Caco-2 (cell line): ENCODE measurements at regions of chr3 and their contacts with region 1.

Region 1: GRCh38 chr3:72973031-72973723 is 23.4 kb upstream of the PPP4R2 start:
- DNase-seq: peak; percentile 90 to 96
- H3K4me3 ChIP-seq: peak overlapping the region; percentile 14; the same call in 1 of the 2 replicates
- H3K4me3 Mint-ChIP-seq: peak overlapping the region; percentile 68
- H3K27ac Mint-ChIP-seq: peak overlapping the region; percentile 88
- H3K4me1 ChIP-seq: peaks cover 37% of the 10 kb centered on the region
- H3K4me1 Mint-ChIP-seq: peaks cover 20% of the 10 kb centered on the region
- H3K27me3 ChIP-seq: no peaks in the 10 kb centered on the region
- H3K27me3 Mint-ChIP-seq: no peaks in the 10 kb centered on the region
- CTCF ChIP-seq: no peak

Region 2: DNA sequence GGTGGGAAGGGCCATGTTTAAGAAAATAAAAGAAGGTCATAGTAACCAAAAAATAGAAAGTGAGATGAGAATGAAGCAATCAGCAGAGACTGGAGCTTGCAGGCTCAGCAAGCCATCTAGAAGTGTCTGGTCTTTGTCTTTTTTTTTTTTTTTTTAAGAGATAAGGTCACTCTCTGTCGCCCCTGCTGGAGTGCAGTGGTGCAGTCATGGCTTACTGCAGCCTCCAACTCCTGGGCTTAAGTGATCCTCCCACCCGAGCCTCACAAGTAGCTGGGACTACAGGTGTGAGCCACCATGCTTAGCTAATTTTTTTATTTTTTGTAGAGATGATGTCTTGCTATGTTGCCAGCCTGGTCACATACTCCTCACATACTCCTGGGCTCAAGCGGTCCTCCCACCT is 49.1 kb before region 1 on chr3:
- CTCF ChIA-PET with region 1: no interaction called
- POLR2A ChIA-PET with region 1: no interaction called
- intact Hi-C with region 1: no loop called
- DNase-seq: peak in 1 of 2 experiments; percentile 22
- H3K4me3 ChIP-seq: no peak overlapping the region
- H3K4me3 Mint-ChIP-seq: no peak overlapping the region
- H3K27ac Mint-ChIP-seq: no peak overlapping the region
- H3K4me1 ChIP-seq: no peaks in the 10 kb centered on the region
- H3K4me1 Mint-ChIP-seq: no peaks in the 10 kb centered on the region
- H3K27me3 ChIP-seq: no peaks in the 10 kb centered on the region
- H3K27me3 Mint-ChIP-seq: no peaks in the 10 kb centered on the region
- CTCF ChIP-seq: no peak

Region 3: GRCh38 chr3:72953325-72953956 is 19.7 kb before region 1 on chr3:
- CTCF ChIA-PET with region 1: no interaction called
- POLR2A ChIA-PET with region 1: no interaction called
- intact Hi-C with region 1: loop called (anchors 1 kb)
- DNase-seq: peak; percentile 71 to 74
- H3K4me3 ChIP-seq: no peak overlapping the region
- H3K4me3 Mint-ChIP-seq: no peak overlapping the region
- H3K27ac Mint-ChIP-seq: no peak overlapping the region
- H3K4me1 ChIP-seq: peaks cover 49% of the 10 kb centered on the region
- H3K4me1 Mint-ChIP-seq: peaks cover 15% of the 10 kb centered on the region
- H3K27me3 ChIP-seq: no peaks in the 10 kb centered on the region
- H3K27me3 Mint-ChIP-seq: no peaks in the 10 kb centered on the region
- CTCF ChIP-seq: no peak